Thyroid gland (tissue), 4 donors: ENCODE measurements at regions of chr19 and their contacts with region 1.

Region 1: GRCh38 chr19:18469069-18469846 is 31.3 kb upstream of the ISYNA1 start:
- DNase-seq: peak; percentile 42 to 47
- H3K4me3 ChIP-seq: no peak overlapping the region
- H3K27ac ChIP-seq: no peak overlapping the region
- H3K4me1 ChIP-seq: peaks cover 14 to 42% of the 10 kb centered on the region in 2 donors
- H3K27me3 ChIP-seq: no peaks in the 10 kb centered on the region
- CTCF ChIP-seq: peak; percentile 45 to 75 (median 54)
- POLR2A ChIP-seq: no peak

Region 2: GRCh38 chr19:18503971-18504885 is 35.0 kb after region 1 on chr19:
- intact Hi-C with region 1: no loop called
- DNase-seq: no peak
- H3K4me3 ChIP-seq: no peak overlapping the region
- H3K27ac ChIP-seq: no peak overlapping the region
- H3K4me1 ChIP-seq: peaks cover 65 to 99% of the 10 kb centered on the region in 2 donors
- H3K27me3 ChIP-seq: no peaks in the 10 kb centered on the region
- CTCF ChIP-seq: no peak
- POLR2A ChIP-seq: no peak

Region 3: GRCh38 chr19:18519962-18520847 is 50.9 kb after region 1 on chr19:
- intact Hi-C with region 1: loop called (anchors 10 kb)
- DNase-seq: peak; percentile 83 to 84
- H3K4me3 ChIP-seq: peak overlapping the region; percentile 35 to 99 (median 97)
- H3K27ac ChIP-seq: peak overlapping the region; percentile 90 to 93 (median 90)
- H3K4me1 ChIP-seq: peaks cover 15 to 31% of the 10 kb centered on the region in 2 donors
- H3K27me3 ChIP-seq: no peaks in the 10 kb centered on the region
- CTCF ChIP-seq: peak in 5 of 6 experiments; percentile 24 to 89 (median 71)
- POLR2A ChIP-seq: peak in 1 of 2 donors; percentile 24